Activated CD4-positive, alpha-beta T cell treated with anti-CD3 and anti-CD28 coated beads for 36 hours (primary cell): ENCODE measurements at regions of chr17 and their contacts with region 1.

Region 1: DNA sequence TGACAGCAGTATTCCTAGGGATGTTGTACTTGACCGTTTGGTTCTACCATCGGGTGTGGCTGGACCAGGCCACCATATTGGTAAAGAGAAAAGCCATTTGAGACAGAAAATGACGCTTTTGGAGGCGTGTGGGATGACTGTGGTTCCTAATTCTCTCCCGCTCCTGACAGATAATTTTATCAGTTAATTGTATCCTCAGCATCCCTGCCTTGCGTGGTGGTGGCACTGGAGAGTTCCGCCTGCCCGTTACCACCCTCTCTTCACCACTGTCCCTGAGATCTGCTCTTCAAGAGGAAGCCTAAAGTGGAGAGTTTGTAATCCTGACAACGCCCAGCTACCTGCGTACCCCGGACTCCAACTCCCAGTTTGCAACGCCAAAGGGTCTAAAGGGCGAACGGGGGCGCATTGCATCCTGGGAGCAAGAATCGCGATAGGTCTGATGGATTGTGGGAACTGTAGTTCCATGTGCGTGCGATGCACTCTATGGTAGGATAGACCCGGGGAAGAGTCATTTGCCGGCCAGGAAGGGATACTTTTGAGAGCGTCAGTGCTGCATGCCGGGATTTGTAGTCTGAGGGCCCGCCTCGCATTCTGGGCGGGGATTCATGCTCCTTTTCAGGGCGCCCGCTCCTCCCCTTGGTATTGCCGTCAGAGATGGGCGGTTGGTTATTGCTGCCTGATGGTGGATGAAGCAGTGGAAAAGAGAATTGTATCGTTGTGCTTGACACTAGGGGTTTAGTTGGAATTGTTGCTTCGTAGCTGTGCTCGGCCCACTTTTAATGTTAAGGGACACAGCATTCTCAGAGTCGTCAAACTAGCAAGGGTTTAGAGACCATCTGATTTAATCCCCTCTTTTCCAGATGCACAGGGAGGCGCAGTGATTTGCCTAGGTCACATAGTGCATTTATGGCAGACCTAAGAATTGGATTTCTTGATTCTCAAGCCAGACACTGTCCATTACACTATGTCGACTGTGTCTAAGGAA is 965 bp upstream of the PHF12 start:
- DNase-seq: peak; percentile 96
- ATAC-seq: peak; percentile 77
- H3K4me3 Mint-ChIP-seq: no peak overlapping the region
- H3K27ac Mint-ChIP-seq: no peak overlapping the region
- H3K4me1 Mint-ChIP-seq: peaks cover 15% of the 10 kb centered on the region
- H3K27me3 Mint-ChIP-seq: no peaks in the 10 kb centered on the region

Region 2: DNA sequence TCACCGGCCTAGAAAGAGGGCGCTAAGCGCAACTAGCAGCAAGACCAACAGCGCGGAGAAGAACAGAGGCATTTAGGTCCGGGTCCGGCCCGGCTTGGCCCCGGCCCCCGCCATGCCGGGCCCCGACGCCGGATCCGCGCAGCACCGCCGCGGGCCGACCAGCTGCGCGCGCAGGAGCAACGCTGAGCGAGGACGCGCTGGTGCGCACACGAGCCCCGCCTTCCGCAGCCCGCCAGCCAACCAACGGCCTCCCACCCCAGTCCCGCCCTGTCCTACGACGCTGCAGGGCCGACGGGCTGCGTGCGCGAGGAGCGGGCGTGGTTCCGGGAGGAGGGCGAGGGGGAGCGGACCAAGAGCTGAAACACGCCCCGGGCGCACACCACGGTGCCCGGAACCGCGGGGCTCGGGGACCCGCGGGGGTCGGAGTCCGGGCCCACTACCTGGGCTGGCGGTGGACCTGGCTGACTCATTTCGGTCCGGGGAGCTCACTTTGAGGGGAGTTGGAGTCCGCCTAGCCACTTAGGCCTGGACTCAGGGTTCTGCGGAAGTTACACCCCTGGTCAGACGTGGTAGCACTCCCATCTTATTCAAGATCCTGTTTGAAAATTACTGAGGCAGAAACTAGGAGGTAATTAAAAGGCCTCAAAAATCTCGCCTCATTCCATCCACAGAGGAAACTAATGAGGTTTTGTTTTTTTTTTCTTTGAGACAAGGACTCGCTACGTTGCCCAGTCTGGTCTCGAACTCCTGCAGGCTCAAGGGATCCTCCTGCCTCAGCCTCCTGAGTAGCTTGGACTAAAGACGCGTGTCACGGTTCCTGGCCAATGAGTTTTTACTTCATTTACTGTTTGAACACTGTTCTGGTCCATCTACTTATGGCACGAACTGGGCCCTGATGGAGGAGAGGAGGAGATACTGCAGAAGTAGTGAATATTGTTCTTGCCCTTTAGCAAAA is 307.0 kb before region 1 on chr17 and contains the start of gene BLTP2:
- CTCF ChIA-PET with region 1: interaction called, 4 read pairs
- POLR2A ChIA-PET with region 1: no interaction called
- intact Hi-C with region 1: loop called (anchors 1 to 5 kb)
- DNase-seq: peak; percentile 98
- ATAC-seq: peak; percentile 98
- H3K4me3 Mint-ChIP-seq: peak within 1 kb of the TSS; percentile 95
- H3K27ac Mint-ChIP-seq: peak within 1 kb of the TSS; percentile 87
- H3K4me1 Mint-ChIP-seq: peaks cover 38% of the 10 kb centered on the region
- H3K27me3 Mint-ChIP-seq: no peaks in the 10 kb centered on the region
- total RNA-seq, gene BLTP2: 138 to 152 TPM

Region 3: DNA sequence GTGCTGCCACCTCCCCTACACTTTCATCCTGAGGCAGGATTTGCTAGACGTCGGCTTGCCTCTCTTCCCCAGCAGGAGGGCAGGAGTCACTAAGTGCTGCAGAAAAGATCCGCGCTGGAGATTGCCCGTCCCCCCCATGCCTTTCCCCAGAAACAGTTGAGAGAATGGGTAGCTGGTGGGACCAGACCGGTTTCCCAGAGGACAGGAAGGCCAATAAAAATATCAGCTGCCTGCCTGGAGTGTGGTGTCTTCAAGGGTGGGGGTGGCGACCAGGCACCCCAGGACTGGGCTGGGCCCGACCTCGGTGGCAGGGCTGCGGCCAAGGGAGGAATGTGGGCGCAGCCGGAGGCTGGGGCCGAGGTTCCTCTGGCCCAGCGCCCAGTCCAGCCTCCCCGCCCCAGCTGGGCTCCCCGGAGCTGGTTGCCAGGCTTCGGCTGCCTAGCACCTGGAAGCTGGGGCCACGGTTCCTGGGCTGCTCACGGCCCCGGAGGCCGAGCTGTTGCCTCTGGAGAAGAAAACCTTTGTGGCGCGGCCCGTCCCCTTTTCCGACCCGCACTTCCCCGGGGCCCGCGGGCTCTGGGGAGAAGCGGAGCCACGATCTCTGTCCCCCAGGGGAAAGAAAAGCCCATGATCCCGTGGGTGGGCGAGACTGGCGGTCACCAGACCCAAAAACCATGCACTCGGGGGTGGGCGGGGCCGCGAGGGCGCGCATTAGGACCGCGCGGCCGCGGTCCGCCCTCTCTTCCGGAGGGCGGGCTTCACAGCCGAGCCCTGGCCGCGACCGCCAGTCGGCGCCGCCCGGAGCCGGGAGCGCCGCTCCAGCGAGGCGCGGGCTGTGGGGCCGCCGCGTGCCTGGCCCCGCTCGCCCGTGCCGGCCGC is 208.8 kb before region 1 on chr17 and contains the start of gene TRAF4:
- CTCF ChIA-PET with region 1: interaction called, 3 read pairs
- POLR2A ChIA-PET with region 1: interaction called, 3 read pairs
- intact Hi-C with region 1: loop called (anchors 5 kb)
- DNase-seq: peak; percentile 89
- ATAC-seq: peak; percentile 91
- H3K4me3 Mint-ChIP-seq: peak within 1 kb of the TSS; percentile 87
- H3K27ac Mint-ChIP-seq: peak within 1 kb of the TSS; percentile 92
- H3K4me1 Mint-ChIP-seq: peaks cover 42% of the 10 kb centered on the region
- H3K27me3 Mint-ChIP-seq: no peaks in the 10 kb centered on the region
- total RNA-seq, gene TRAF4: 96.5 to 117 TPM

Region 4: GRCh38 chr17:28902819-28903545 is 49.3 kb before region 1 on chr17 and contains the start of gene DHRS13:
- CTCF ChIA-PET with region 1: interaction called, 5 read pairs
- POLR2A ChIA-PET with region 1: interaction called, 4 read pairs
- intact Hi-C with region 1: loop called (anchors 1 kb)
- DNase-seq: peak; percentile 97
- ATAC-seq: peak; percentile 89
- H3K4me3 Mint-ChIP-seq: peak within 1 kb of the TSS; percentile 87
- H3K27ac Mint-ChIP-seq: peak within 1 kb of the TSS; percentile 92
- H3K4me1 Mint-ChIP-seq: peaks cover 34% of the 10 kb centered on the region
- H3K27me3 Mint-ChIP-seq: no peaks in the 10 kb centered on the region
- total RNA-seq, gene DHRS13: 23.3 to 29.5 TPM

Region 5: DNA sequence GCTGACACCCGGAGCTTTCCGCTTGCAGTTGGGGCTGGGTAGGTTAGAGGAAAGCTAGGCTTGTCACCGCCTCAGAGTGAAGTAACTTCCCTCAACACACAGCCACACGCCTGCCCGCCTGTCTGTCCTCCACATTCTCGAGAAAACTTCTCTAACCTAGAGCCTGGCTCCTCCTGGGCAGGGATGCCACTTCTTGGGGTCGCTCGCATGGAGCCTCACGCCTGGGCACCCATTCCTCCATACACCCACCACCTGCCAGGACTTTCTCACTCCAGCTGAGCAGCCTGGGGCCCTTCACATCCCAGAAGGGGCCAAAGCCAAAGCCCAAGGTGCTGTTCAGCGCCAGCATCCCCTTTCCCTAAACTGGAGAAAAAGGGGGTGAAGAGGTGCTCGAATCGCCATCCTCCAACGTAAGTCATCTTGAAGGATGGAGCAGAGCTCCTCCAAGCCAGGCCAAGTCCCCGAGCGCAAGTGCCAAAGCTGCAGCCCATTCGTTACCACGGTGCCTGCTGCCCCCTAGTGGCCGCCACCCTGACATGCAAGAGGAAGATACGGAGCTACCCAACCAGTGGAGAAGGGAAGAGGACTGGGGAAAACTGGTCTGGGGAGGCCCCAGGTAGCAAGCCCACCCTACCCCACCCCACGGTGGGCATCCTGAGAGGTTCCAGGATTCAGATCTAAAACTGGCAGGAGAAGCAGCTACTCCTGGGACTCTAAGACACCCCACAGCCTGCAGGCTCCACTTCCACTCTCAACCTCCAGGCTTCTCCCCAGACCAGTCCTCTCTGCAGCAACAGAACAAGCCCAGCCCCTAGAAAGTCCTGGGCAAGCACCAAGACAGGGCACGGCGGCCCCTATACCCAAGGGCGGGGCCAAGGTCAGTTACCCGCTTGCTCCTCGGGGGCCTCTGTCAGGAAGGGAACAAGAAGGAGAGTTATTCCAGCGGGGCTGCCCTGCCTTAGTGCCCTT is 164.8 kb after region 1 on chr17:
- CTCF ChIA-PET with region 1: interaction called, 35 read pairs
- POLR2A ChIA-PET with region 1: no interaction called
- intact Hi-C with region 1: no loop called
- DNase-seq: peak; percentile 90
- ATAC-seq: peak; percentile 88
- H3K4me3 Mint-ChIP-seq: no peak overlapping the region
- H3K27ac Mint-ChIP-seq: no peak overlapping the region
- H3K4me1 Mint-ChIP-seq: peaks cover 5% of the 10 kb centered on the region
- H3K27me3 Mint-ChIP-seq: no peaks in the 10 kb centered on the region

Region 6: GRCh38 chr17:29617125-29617480 is 664.8 kb after region 1 on chr17:
- CTCF ChIA-PET with region 1: interaction called, 3 read pairs
- POLR2A ChIA-PET with region 1: no interaction called
- intact Hi-C with region 1: loop called in 1 of 2 experiments (anchors 5 kb)
- DNase-seq: peak; percentile 98
- ATAC-seq: peak; percentile 82
- H3K4me3 Mint-ChIP-seq: peak overlapping the region; percentile 75
- H3K27ac Mint-ChIP-seq: peak overlapping the region; percentile 89
- H3K4me1 Mint-ChIP-seq: peaks cover 47% of the 10 kb centered on the region
- H3K27me3 Mint-ChIP-seq: peaks cover 2% of the 10 kb centered on the region